Thyroid gland (tissue), 4 donors: ENCODE measurements at regions of chr7 and their contacts with region 1.

Region 1: DNA sequence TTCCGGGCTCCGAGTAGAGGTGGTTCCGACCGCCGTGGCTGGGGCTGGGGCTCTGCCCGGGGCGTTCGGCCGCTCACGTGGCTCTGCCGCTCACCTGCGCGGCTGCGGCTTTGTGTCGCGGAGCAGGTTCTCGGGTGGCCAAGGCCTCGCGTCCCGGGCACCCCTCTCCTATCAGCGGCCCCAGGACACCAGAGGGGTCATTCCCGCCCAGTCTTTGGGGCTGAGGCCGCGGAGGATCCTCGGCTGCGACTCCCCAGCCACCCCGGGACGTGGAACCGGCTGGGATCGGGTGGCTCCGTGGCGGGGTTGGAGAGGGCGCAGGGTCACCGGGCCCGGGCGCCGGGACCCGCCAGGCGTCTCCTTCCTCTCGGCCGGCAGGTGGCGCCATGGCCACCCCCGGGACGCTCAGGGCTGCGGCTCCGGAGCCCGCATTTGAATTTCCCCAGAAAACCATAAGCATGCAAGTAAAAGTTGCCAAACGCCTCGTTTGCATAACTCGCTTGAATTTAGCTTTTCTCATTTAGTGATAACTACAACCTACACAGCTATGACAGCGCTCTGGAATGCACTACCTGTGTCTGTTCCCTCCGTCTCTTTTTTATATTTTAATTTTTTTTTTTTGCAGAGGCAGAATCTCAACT is 1.2 kb downstream of the COL26A1 start:
- DNase-seq: peak; percentile 67 to 68
- H3K4me3 ChIP-seq: peak overlapping the region in 2 of 3 donors; percentile 7 to 39
- H3K27ac ChIP-seq: no peak overlapping the region
- H3K4me1 ChIP-seq: peaks cover 0 to 20% of the 10 kb centered on the region in 2 donors
- H3K27me3 ChIP-seq: no peaks in the 10 kb centered on the region
- CTCF ChIP-seq: peak; percentile 62 to 91 (median 82)
- POLR2A ChIP-seq: no peak

Region 2: GRCh38 chr7:100974018-100974417 is 389.8 kb before region 1 on chr7:
- intact Hi-C with region 1: no loop called
- DNase-seq: no peak
- H3K4me3 ChIP-seq: no peak overlapping the region
- H3K27ac ChIP-seq: no peak overlapping the region
- H3K4me1 ChIP-seq: no peaks in the 10 kb centered on the region
- H3K27me3 ChIP-seq: no peaks in the 10 kb centered on the region
- CTCF ChIP-seq: no peak
- POLR2A ChIP-seq: no peak

Region 3: GRCh38 chr7:101217388-101218235 is 146.2 kb before region 1 on chr7 and contains the starts of genes PLOD3 and ZNHIT1:
- intact Hi-C with region 1: no loop called
- DNase-seq: peak; percentile 97 to 98
- H3K4me3 ChIP-seq: peak within 1 kb of the TSS; percentile 84 to 86 (median 86)
- H3K27ac ChIP-seq: peak within 1 kb of the TSS; percentile 89 to 96 (median 93)
- H3K4me1 ChIP-seq: peaks cover 19 to 30% of the 10 kb centered on the region in 2 donors
- H3K27me3 ChIP-seq: no peaks in the 10 kb centered on the region
- CTCF ChIP-seq: peak in 3 of 6 experiments; percentile 19 to 27 (median 24)
- POLR2A ChIP-seq: peak in 1 of 2 donors; percentile 36
- total RNA-seq, gene PLOD3: 30.0 to 42.5 (median 32.7) TPM
- total RNA-seq, gene ZNHIT1: 71.5 to 141 (median 107) TPM

Region 4: GRCh38 chr7:101410743-101411507 is 47.1 kb after region 1 on chr7:
- intact Hi-C with region 1: loop called (anchors 10 kb)
- DNase-seq: peak; percentile 28 to 36
- H3K4me3 ChIP-seq: no peak overlapping the region
- H3K27ac ChIP-seq: no peak overlapping the region
- H3K4me1 ChIP-seq: no peaks in the 10 kb centered on the region
- H3K27me3 ChIP-seq: no peaks in the 10 kb centered on the region
- CTCF ChIP-seq: peak; percentile 57 to 82 (median 71)
- POLR2A ChIP-seq: no peak

Region 5: GRCh38 chr7:101659706-101660105 is 295.9 kb after region 1 on chr7:
- intact Hi-C with region 1: no loop called
- DNase-seq: no peak
- H3K4me3 ChIP-seq: no peak overlapping the region
- H3K27ac ChIP-seq: no peak overlapping the region
- H3K4me1 ChIP-seq: no peaks in the 10 kb centered on the region
- H3K27me3 ChIP-seq: no peaks in the 10 kb centered on the region
- CTCF ChIP-seq: no peak
- POLR2A ChIP-seq: no peak